ENCODE measurements at regions of chr11 and their contacts with region 1.

Region 1: GRCh38 chr11:1717745-1718144 is 20.8 kb downstream of the KRTAP5-6 start:
- DNase-seq: no peak
- ATAC-seq: no peak
- H3K4me3 ChIP-seq: no peak overlapping the region
- H3K4me3 Mint-ChIP-seq: no peak overlapping the region
- H3K27ac ChIP-seq: no peak overlapping the region
- H3K27ac Mint-ChIP-seq: no peak overlapping the region
- H3K4me1 ChIP-seq: no peaks in the 10 kb centered on the region
- H3K4me1 Mint-ChIP-seq: no peaks in the 10 kb centered on the region
- H3K27me3 ChIP-seq: no peaks in the 10 kb centered on the region
- H3K27me3 Mint-ChIP-seq: no peaks in the 10 kb centered on the region
- CTCF ChIP-seq: no peak

Region 2: GRCh38 chr11:1785749-1786413 is 68.1 kb after region 1 on chr11:
- CTCF ChIA-PET with region 1: no interaction called
- POLR2A ChIA-PET with region 1: no interaction called
- intact Hi-C with region 1: loop called in 1 of 2 experiments (anchors 5 kb)
- DNase-seq: peak in 1 of 9 experiments; percentile 1
- ATAC-seq: no peak
- H3K4me3 ChIP-seq: no peak overlapping the region
- H3K4me3 Mint-ChIP-seq: no peak overlapping the region
- H3K27ac ChIP-seq: no peak overlapping the region
- H3K27ac Mint-ChIP-seq: no peak overlapping the region
- H3K4me1 ChIP-seq: no peaks in the 10 kb centered on the region
- H3K4me1 Mint-ChIP-seq: no peaks in the 10 kb centered on the region
- H3K27me3 ChIP-seq: no peaks in the 10 kb centered on the region
- H3K27me3 Mint-ChIP-seq: no peaks in the 10 kb centered on the region
- CTCF ChIP-seq: no peak